Activated naive CD4-positive, alpha-beta T cell treated with anti-CD3 and anti-CD28 coated beads, Interleukin-2, amount 10 ng/mL, durations not matched to agents 7 days and 5 days (primary cell): ENCODE measurements at regions of chr15 and their contacts with region 1.

Region 1: DNA sequence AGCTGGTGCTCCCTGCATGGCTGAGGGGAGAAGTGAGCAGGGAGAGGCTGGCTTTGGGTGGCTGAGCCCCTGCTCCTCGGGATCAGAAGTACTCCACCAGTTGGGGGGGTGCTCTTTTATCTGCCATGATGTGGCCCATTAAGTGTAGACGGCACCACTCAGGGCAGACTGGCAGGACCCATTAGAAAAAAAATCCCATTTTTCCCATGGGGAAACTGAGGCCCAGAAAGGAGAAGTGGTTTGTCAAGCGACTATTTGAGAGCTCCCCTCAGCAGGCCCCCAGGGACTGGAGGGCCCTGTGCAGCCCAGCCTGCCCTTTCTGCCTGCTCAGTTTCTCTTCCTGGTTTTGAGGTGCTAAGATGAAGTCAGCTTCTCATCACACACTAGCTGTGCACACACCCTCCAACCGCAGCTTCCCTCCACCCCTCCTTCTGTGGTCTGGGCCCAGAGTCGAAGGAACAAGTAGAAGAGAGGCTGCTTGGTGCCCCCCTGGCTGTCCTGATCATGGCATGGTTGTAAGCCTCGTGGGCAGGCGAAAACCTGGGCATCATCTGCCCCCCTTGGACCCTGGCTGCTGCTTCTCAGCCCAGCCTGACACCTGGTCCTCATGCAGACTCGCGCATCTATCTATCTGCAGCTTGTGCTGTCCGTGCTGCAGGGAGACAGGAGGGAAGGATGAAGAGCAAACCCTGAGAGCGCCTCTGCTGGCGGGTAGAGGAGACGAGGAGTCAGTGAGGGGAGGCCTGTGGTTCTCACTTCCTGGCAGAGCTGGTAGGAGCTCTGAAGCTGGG is 5.6 kb downstream of the CSK start:
- DNase-seq: peak; percentile 95
- H3K4me3 Mint-ChIP-seq: peak overlapping the region; percentile 91
- H3K27ac Mint-ChIP-seq: peak overlapping the region; percentile 99
- H3K4me1 Mint-ChIP-seq: peaks cover 69% of the 10 kb centered on the region
- H3K27me3 Mint-ChIP-seq: no peaks in the 10 kb centered on the region

Region 2: GRCh38 chr15:74723754-74724334 is 63.6 kb before region 1 on chr15:
- CTCF ChIA-PET with region 1: no interaction called
- DNase-seq: no peak
- H3K4me3 Mint-ChIP-seq: peak overlapping the region; percentile 78
- H3K27ac Mint-ChIP-seq: peak overlapping the region; percentile 17
- H3K4me1 Mint-ChIP-seq: peaks cover 31% of the 10 kb centered on the region
- H3K27me3 Mint-ChIP-seq: peaks cover 33% of the 10 kb centered on the region

Region 3: GRCh38 chr15:74735305-74735704 is 52.1 kb before region 1 on chr15:
- CTCF ChIA-PET with region 1: no interaction called
- DNase-seq: no peak
- H3K4me3 Mint-ChIP-seq: no peak overlapping the region
- H3K27ac Mint-ChIP-seq: no peak overlapping the region
- H3K4me1 Mint-ChIP-seq: peaks cover 3% of the 10 kb centered on the region
- H3K27me3 Mint-ChIP-seq: peaks cover 45% of the 10 kb centered on the region

Region 4: GRCh38 chr15:74799856-74800547 is 12.6 kb after region 1 on chr15:
- CTCF ChIA-PET with region 1: interaction called, 880 read pairs
- DNase-seq: peak; percentile 89
- H3K4me3 Mint-ChIP-seq: no peak overlapping the region
- H3K27ac Mint-ChIP-seq: peak overlapping the region; percentile 81
- H3K4me1 Mint-ChIP-seq: peaks cover 58% of the 10 kb centered on the region
- H3K27me3 Mint-ChIP-seq: no peaks in the 10 kb centered on the region

Region 5: GRCh38 chr15:74842581-74843444 is 55.4 kb after region 1 on chr15 and contains the start of gene ULK3:
- CTCF ChIA-PET with region 1: interaction called, 11 read pairs
- DNase-seq: peak; percentile 95
- H3K4me3 Mint-ChIP-seq: peak within 1 kb of the TSS; percentile 95
- H3K27ac Mint-ChIP-seq: peak within 1 kb of the TSS; percentile 92
- H3K4me1 Mint-ChIP-seq: peaks cover 61% of the 10 kb centered on the region
- H3K27me3 Mint-ChIP-seq: no peaks in the 10 kb centered on the region